SK-N-SH (cell line): ENCODE measurements at regions of chr7 and their contacts with region 1.

Region 1: GRCh38 chr7:24812310-24812945 is 55.2 kb upstream of the GSDME start:
- DNase-seq: peak; percentile 67
- H3K4me3 ChIP-seq: no peak overlapping the region; a peak in 1 of 4 replicates
- H3K27ac ChIP-seq: no peak overlapping the region
- H3K4me1 ChIP-seq: peaks cover 0 to 4% of the 10 kb centered on the region in 2 experiments; a peak in 1 of 4 replicates
- H3K27me3 ChIP-seq: no peaks in the 10 kb centered on the region
- CTCF ChIP-seq: peak; percentile 100
- EP300 ChIP-seq: no peak
- RAD21 ChIP-seq: peak; percentile 75

Region 2: GRCh38 chr7:24653316-24654085 is 158.9 kb before region 1 on chr7:
- CTCF ChIA-PET with region 1: no interaction called
- POLR2A ChIA-PET with region 1: no interaction called
- DNase-seq: no peak
- H3K4me3 ChIP-seq: no peak overlapping the region
- H3K27ac ChIP-seq: peak overlapping the region in 1 of 2 experiments; percentile 30; a peak in 1 of 4 replicates
- H3K4me1 ChIP-seq: peaks cover 0 to 2% of the 10 kb centered on the region in 2 experiments; a peak in 1 of 4 replicates
- H3K27me3 ChIP-seq: no peaks in the 10 kb centered on the region
- CTCF ChIP-seq: no peak
- EP300 ChIP-seq: no peak
- RAD21 ChIP-seq: no peak

Region 3: GRCh38 chr7:24786941-24787340 is 25.5 kb before region 1 on chr7:
- CTCF ChIA-PET with region 1: interaction called, 10 read pairs
- POLR2A ChIA-PET with region 1: no interaction called
- DNase-seq: no peak
- H3K4me3 ChIP-seq: no peak overlapping the region
- H3K27ac ChIP-seq: peak overlapping the region in 1 of 2 experiments; percentile 87; a peak in 2 of 4 replicates
- H3K4me1 ChIP-seq: peaks cover 0 to 9% of the 10 kb centered on the region in 2 experiments; a peak in 1 of 4 replicates
- H3K27me3 ChIP-seq: no peaks in the 10 kb centered on the region
- CTCF ChIP-seq: no peak
- EP300 ChIP-seq: no peak
- RAD21 ChIP-seq: no peak

Region 4: DNA sequence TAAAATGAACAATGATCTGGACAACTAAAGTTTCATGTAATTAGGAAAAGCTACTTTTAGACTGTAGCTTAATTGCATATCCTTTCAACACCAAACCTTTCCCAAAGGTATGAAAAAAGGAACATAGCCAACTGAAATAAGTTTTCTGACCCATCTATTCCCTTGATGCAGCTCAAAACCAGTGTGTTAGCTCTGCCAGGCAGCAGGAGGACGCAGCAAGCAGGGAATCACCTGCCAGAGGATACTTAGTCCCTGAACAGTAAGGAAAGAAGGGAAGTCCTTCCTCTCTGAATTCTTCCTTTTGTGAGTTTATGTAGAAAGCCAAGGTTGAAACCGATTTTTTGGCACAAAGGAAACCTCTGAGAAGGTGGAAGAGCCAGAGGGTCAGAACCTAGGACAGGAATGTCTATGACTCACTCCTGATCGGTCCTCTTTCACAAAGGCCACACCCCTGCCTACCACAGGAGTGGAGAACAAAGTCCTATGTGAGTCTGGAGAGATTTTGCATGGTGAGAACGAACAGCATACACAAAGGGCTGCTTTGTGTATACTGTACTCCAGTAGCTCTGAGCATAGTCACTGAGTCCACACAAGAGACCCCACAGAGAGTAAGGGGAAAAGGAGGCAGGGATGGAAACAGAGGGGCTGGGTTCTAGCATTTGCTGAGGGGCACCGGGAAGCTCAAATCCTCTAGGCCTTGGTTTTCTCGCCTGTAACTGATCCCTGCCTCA is 13.7 kb after region 1 on chr7:
- CTCF ChIA-PET with region 1: interaction called, 54 read pairs
- POLR2A ChIA-PET with region 1: no interaction called
- DNase-seq: no peak
- H3K4me3 ChIP-seq: no peak overlapping the region
- H3K27ac ChIP-seq: peak overlapping the region; percentile 72 to 95; a peak in 3 of 4 replicates
- H3K4me1 ChIP-seq: peaks cover 24 to 60% of the 10 kb centered on the region in 2 experiments
- H3K27me3 ChIP-seq: no peaks in the 10 kb centered on the region
- CTCF ChIP-seq: no peak
- EP300 ChIP-seq: peak in 1 of 2 experiments; percentile 35; a peak in 1 of 4 replicates
- RAD21 ChIP-seq: no peak

Region 5: DNA sequence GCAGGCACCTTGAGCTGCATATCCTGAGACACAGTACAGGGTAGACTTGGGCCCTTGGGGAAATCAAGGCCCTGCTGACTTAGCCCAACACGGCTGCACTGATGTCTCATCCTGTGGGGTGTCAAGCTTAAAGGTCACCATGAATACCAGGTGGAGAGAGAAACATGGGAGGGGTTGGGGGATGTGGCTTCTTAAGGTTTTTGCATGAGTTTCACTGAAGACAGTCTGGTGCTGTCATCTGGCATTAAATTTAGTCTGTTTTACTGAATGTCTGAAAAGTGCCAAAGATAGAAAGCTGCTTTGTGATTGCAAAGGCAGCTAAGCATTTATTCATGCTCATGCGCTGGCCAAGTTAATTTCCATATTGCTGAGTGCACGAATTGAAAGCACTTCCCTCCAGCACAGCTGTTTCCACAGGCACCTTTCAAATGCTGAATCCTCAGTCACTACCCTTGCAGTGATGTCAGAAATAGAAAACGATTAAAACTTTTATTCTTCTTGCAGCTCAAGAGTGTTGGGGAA is 65.4 kb after region 1 on chr7:
- CTCF ChIA-PET with region 1: interaction called, 10 read pairs
- POLR2A ChIA-PET with region 1: no interaction called
- DNase-seq: no peak
- H3K4me3 ChIP-seq: no peak overlapping the region
- H3K27ac ChIP-seq: no peak overlapping the region
- H3K4me1 ChIP-seq: peaks cover 3 to 4% of the 10 kb centered on the region in 2 experiments; a peak in 3 of 4 replicates
- H3K27me3 ChIP-seq: no peaks in the 10 kb centered on the region
- CTCF ChIP-seq: no peak
- EP300 ChIP-seq: no peak
- RAD21 ChIP-seq: no peak

Region 6: GRCh38 chr7:25028370-25029021 is 216.1 kb after region 1 on chr7:
- CTCF ChIA-PET with region 1: interaction called, 16 read pairs
- POLR2A ChIA-PET with region 1: no interaction called
- DNase-seq: no peak
- H3K4me3 ChIP-seq: no peak overlapping the region
- H3K27ac ChIP-seq: peak overlapping the region in 1 of 2 experiments; percentile 61; a peak in 2 of 4 replicates
- H3K4me1 ChIP-seq: peaks cover 0 to 32% of the 10 kb centered on the region in 2 experiments; a peak in 2 of 4 replicates
- H3K27me3 ChIP-seq: no peaks in the 10 kb centered on the region
- CTCF ChIP-seq: no peak
- EP300 ChIP-seq: peak in 1 of 2 experiments; percentile 48; a peak in 1 of 4 replicates
- RAD21 ChIP-seq: no peak

Region 7: GRCh38 chr7:25069900-25070443 is 257.5 kb after region 1 on chr7:
- CTCF ChIA-PET with region 1: interaction called, 81 read pairs
- POLR2A ChIA-PET with region 1: no interaction called
- DNase-seq: peak; percentile 83
- H3K4me3 ChIP-seq: peak overlapping the region in 1 of 2 experiments; percentile 30; a peak in 1 of 4 replicates
- H3K27ac ChIP-seq: no peak overlapping the region
- H3K4me1 ChIP-seq: no peaks in the 10 kb centered on the region
- H3K27me3 ChIP-seq: no peaks in the 10 kb centered on the region
- CTCF ChIP-seq: peak; percentile 99
- EP300 ChIP-seq: no peak
- RAD21 ChIP-seq: peak; percentile 93

Region 8: GRCh38 chr7:25087855-25088254 is 275.4 kb after region 1 on chr7:
- CTCF ChIA-PET with region 1: interaction called, 396 read pairs
- POLR2A ChIA-PET with region 1: no interaction called
- DNase-seq: no peak
- H3K4me3 ChIP-seq: no peak overlapping the region
- H3K27ac ChIP-seq: no peak overlapping the region
- H3K4me1 ChIP-seq: peaks cover 0 to 3% of the 10 kb centered on the region in 2 experiments; a peak in 1 of 4 replicates
- H3K27me3 ChIP-seq: no peaks in the 10 kb centered on the region
- CTCF ChIP-seq: no peak
- EP300 ChIP-seq: no peak
- RAD21 ChIP-seq: no peak